Activated T-helper 1 cell treated with anti-CD3 and anti-CD28 coated beads, Interleukin-12 subunit alpha, Interleukin-12 subunit beta, Interleukin-2, Interleukin-4 antibody, amounts not matched to agents 30 ng/mL and 10 ng/mL and 1 ng/mL, durations not matched to agents 14 hours and 24 hours and 36 hours (primary cell): ENCODE measurements at regions of chr14 and their contacts with region 1.

Region 1: DNA sequence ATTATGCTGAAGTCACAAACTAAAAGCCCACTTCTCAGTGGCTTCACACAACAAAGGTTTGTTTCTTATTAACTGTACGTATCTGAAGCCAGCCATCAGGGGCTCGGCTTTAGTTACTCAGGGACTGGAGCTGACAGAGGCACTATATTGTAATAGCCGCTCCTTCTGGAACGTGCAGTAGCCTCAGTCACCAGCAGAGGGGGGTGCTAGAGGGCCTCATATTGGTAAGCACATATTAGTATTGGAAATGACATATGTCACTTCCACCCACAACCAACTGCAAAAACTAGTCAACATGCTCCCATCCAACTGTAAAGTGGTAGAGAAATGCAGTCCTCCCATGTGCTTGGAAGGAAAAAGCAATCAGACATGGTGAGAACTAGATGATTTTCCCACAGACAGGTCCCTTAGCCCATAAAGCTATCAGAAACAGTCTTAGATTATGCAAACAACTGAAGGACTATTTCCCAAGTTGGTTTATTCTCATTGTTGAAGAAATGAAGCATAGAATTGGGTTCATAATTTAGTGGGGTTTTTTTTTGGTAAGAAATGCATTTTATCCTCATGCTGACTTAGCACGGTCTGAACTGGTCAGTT is 183.6 kb upstream of the G2E3 start:
- DNase-seq: peak; percentile 35
- H3K4me3 Mint-ChIP-seq: no peak overlapping the region
- H3K27ac Mint-ChIP-seq: no peak overlapping the region
- H3K4me1 Mint-ChIP-seq: no peaks in the 10 kb centered on the region
- H3K27me3 Mint-ChIP-seq: peaks cover 5% of the 10 kb centered on the region

Region 2: GRCh38 chr14:30129807-30130206 is 245.6 kb before region 1 on chr14:
- intact Hi-C with region 1: no loop called
- DNase-seq: no peak
- H3K4me3 Mint-ChIP-seq: no peak overlapping the region
- H3K27ac Mint-ChIP-seq: no peak overlapping the region
- H3K4me1 Mint-ChIP-seq: no peaks in the 10 kb centered on the region
- H3K27me3 Mint-ChIP-seq: no peaks in the 10 kb centered on the region

Region 3: DNA sequence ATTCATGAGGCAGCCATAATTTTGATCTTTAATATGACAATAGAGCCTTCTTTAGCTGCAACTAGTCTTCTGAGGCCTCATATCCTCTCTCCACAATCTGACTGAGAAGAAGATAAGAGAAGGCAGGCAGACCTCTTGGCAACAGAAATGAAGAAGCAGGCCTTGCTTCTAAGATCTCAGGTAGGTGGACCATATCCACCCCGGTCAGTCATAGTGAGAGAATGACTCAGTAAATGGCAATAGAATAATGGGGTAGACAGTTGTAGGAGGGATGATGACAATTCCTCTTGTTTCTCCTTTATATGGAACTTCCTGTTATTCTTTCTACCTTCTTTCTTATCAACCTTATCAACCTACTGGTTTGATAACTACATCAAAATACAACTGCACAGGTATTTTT is 63.2 kb before region 1 on chr14:
- intact Hi-C with region 1: no loop called
- DNase-seq: no peak
- H3K4me3 Mint-ChIP-seq: no peak overlapping the region
- H3K27ac Mint-ChIP-seq: no peak overlapping the region
- H3K4me1 Mint-ChIP-seq: no peaks in the 10 kb centered on the region
- H3K27me3 Mint-ChIP-seq: no peaks in the 10 kb centered on the region

Region 4: DNA sequence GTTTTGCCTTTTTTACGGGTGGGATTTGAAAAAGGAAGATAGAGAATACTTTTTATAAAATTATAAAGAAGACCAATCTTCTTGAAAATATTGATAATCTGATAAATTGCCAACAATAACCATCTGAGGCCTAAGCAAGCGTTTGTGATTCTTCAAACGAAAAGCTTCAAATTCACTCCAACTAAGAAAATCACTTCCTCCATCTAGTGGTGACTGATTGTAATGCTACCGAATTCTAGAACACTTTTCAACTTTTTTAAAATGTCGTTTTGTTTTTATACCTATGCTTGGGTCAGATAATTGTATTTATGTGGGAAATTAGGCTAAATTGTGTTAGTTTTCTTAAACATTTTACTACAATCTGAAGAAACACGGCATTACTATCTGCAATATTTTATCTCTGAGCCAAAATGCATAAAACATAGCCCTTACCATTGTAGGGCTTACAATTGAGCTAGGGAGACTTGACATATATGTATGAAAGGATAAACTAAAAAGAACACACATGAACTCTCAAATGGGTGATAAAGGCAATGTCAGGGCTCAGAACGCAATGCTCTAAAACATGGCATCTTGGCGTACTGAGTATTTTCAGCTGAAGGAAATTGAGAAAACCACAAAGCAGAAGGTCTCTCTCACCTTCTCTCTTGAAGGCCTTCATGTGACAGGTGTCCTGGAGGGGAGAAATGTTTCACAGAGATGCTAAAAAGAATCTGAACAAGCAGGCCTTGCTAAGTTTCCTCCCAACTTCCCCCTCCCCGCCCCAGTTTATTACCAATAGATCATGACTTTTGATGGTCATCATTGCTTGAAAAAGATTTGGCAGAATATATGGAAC is 146.7 kb after region 1 on chr14:
- intact Hi-C with region 1: loop called (anchors 1 kb)
- DNase-seq: no peak
- H3K4me3 Mint-ChIP-seq: no peak overlapping the region
- H3K27ac Mint-ChIP-seq: no peak overlapping the region
- H3K4me1 Mint-ChIP-seq: peaks cover 6% of the 10 kb centered on the region
- H3K27me3 Mint-ChIP-seq: peaks cover 2% of the 10 kb centered on the region

Region 5: DNA sequence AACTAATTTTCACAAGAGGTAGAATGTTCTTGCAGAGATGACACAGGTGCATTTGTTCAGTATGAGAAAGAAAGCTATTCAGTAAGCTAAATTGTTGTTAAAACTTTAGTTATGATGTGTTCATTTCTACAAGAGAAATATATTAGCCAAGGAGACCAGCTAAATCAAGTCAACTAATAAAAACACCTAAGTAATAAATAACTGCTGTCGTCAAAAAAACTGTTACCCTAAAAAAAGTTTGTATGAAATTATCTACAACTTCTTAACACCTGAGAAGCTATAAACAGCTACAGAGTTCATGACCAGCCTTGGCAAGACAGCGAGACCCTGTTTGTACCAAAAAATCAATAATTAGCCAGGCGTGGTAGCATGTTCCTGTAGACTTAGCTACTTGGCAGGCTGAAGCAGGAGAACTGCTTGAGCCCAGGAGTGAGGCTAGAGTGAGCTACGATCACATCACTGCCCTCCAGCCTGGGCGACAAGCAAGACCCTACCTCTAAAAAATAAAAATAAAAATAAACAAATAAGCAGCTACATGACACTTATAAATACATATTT is 582.5 kb after region 1 on chr14:
- intact Hi-C with region 1: no loop called
- DNase-seq: no peak
- H3K4me3 Mint-ChIP-seq: no peak overlapping the region
- H3K27ac Mint-ChIP-seq: peak overlapping the region; percentile 64
- H3K4me1 Mint-ChIP-seq: peaks cover 20% of the 10 kb centered on the region
- H3K27me3 Mint-ChIP-seq: no peaks in the 10 kb centered on the region